Activated CD8-positive, alpha-beta T cell treated with anti-CD3 and anti-CD28 coated beads, Interleukin-2, amount 10 ng/mL, durations not matched to agents 7 days and 5 days (primary cell): ENCODE measurements at regions of chr11 and their contacts with region 1.

Region 1: GRCh38 chr11:5600374-5600851 is 4.0 kb downstream of the TRIM6 start:
- DNase-seq: peak; percentile 76
- ATAC-seq: peak; percentile 95
- H3K4me3 Mint-ChIP-seq: no peak overlapping the region
- H3K27ac Mint-ChIP-seq: no peak overlapping the region
- H3K4me1 Mint-ChIP-seq: peaks cover 9% of the 10 kb centered on the region
- H3K27me3 Mint-ChIP-seq: no peaks in the 10 kb centered on the region

Region 2: DNA sequence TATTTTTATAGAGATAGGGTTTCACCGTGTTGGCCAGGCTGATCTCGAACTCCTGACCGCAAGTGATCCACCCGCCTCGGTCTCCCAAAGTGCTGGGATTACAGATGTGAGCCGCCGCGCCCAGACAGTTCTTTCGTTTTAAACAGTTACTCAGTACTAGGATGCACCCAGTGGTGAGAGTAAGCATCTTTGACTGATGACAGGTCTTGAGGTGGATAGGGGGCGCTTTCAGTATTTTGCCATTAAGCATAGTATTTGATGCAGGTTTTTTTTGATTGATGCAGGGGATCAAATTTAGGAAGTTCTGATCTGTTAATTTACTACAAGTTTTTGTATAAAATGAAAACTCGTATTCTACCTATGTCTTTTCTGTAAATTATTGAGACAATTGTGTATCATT is 11.2 kb after region 1 on chr11:
- CTCF ChIA-PET with region 1: interaction called, 14 read pairs
- POLR2A ChIA-PET with region 1: no interaction called
- DNase-seq: no peak
- ATAC-seq: peak; percentile 53
- H3K4me3 Mint-ChIP-seq: no peak overlapping the region
- H3K27ac Mint-ChIP-seq: no peak overlapping the region
- H3K4me1 Mint-ChIP-seq: peaks cover 8% of the 10 kb centered on the region
- H3K27me3 Mint-ChIP-seq: no peaks in the 10 kb centered on the region

Region 3: GRCh38 chr11:5684646-5685362 is 84.4 kb after region 1 on chr11 and contains the start of gene TRIM5:
- CTCF ChIA-PET with region 1: interaction called, 13 read pairs
- POLR2A ChIA-PET with region 1: no interaction called
- DNase-seq: peak; percentile 86
- ATAC-seq: peak; percentile 85
- H3K4me3 Mint-ChIP-seq: peak within 1 kb of the TSS; percentile 97
- H3K27ac Mint-ChIP-seq: peak within 1 kb of the TSS; percentile 96
- H3K4me1 Mint-ChIP-seq: peaks cover 51% of the 10 kb centered on the region
- H3K27me3 Mint-ChIP-seq: no peaks in the 10 kb centered on the region
- total RNA-seq, gene TRIM5: 28.1 to 33.4 TPM

Region 4: GRCh38 chr11:5808500-5809121 is 208.2 kb after region 1 on chr11 and contains the start of gene OR52N2:
- CTCF ChIA-PET with region 1: interaction called, 12 read pairs
- POLR2A ChIA-PET with region 1: no interaction called
- DNase-seq: peak; percentile 80
- ATAC-seq: peak; percentile 95
- H3K4me3 Mint-ChIP-seq: peak within 1 kb of the TSS; percentile 88
- H3K27ac Mint-ChIP-seq: peak within 1 kb of the TSS; percentile 43
- H3K4me1 Mint-ChIP-seq: peaks cover 12% of the 10 kb centered on the region
- H3K27me3 Mint-ChIP-seq: peaks cover 18% of the 10 kb centered on the region
- total RNA-seq, gene OR52N2: not detected